HepG2 (cell line): ENCODE measurements at regions of chr7 and their contacts with region 1.

Region 1: GRCh38 chr7:156668181-156668624 is 27.6 kb downstream of the RNF32 start:
- DNase-seq: peak; percentile 21
- ATAC-seq: no peak
- H3K4me3 ChIP-seq: no peak overlapping the region
- H3K27ac ChIP-seq: no peak overlapping the region
- H3K4me1 ChIP-seq: peaks cover 36% of the 10 kb centered on the region
- H3K27me3 ChIP-seq: no peaks in the 10 kb centered on the region
- CTCF ChIP-seq: no peak
- EP300 ChIP-seq: no peak
- POLR2A ChIP-seq: no peak
- RAD21 ChIP-seq: no peak

Region 2: GRCh38 chr7:156747691-156748090 is 79.5 kb after region 1 on chr7:
- CTCF ChIA-PET with region 1: no interaction called
- POLR2A ChIA-PET with region 1: no interaction called
- in situ Hi-C with region 1: no loop called
- intact Hi-C with region 1: loop called (anchors 5 kb)
- DNase-seq: peak; percentile 80
- ATAC-seq: peak; percentile 87
- H3K4me3 ChIP-seq: no peak overlapping the region
- H3K27ac ChIP-seq: no peak overlapping the region
- H3K4me1 ChIP-seq: peaks cover 37% of the 10 kb centered on the region
- H3K27me3 ChIP-seq: no peaks in the 10 kb centered on the region
- CTCF ChIP-seq: no peak
- EP300 ChIP-seq: peak in 1 of 2 experiments; percentile 67; a peak in 2 of 4 replicates
- POLR2A ChIP-seq: no peak
- RAD21 ChIP-seq: no peak

Region 3: GRCh38 chr7:156918635-156919034 is 250.4 kb after region 1 on chr7:
- CTCF ChIA-PET with region 1: no interaction called
- POLR2A ChIA-PET with region 1: no interaction called
- in situ Hi-C with region 1: no loop called
- intact Hi-C with region 1: no loop called
- DNase-seq: no peak
- ATAC-seq: no peak
- H3K4me3 ChIP-seq: no peak overlapping the region
- H3K27ac ChIP-seq: no peak overlapping the region
- H3K4me1 ChIP-seq: peaks cover 15% of the 10 kb centered on the region
- H3K27me3 ChIP-seq: peaks cover 0 to 14% of the 10 kb centered on the region in 2 experiments; a peak in 2 of 5 replicates
- CTCF ChIP-seq: no peak
- EP300 ChIP-seq: no peak
- POLR2A ChIP-seq: no peak
- RAD21 ChIP-seq: no peak